Heart right ventricle (tissue), 16 donors: ENCODE measurements at regions of chr1 and their contacts with region 1.

Region 1: DNA sequence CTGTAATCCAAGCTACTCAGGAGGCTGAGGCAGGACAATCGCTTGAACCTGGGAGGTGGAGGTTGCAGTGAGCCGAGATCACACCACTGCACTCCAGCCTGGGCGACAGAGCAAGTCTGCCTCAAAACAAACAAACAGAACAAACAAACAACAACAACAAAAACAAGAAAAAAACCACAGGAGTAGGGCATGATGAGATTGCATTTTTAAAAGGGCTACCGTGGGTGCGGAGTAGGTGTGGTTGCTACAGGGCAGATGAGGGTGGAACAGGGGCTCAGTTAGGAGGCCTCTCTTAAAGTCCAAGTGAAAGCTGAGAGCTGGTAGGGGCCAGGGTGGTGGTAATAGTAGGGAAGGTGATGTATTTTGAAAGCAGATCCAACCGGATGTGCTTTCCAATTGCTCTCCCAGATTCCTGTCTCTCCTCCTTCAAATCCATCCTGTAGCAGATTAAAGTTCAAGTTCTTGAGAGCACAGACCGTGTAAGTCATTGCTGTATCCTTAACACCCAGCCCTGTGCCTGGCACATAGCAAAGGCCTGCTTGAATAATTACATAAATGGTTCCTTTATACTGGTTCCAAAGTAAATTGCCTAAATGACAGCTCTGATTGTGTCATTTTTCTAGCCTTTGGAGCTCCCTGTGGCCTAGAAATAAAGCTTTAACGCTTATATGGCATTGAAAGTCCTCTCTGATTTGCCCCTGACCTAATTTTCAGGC is 4.2 kb upstream of the LINGO4 start:
- DNase-seq: no peak
- ATAC-seq: no peak
- H3K4me3 ChIP-seq: no peak overlapping the region
- H3K27ac ChIP-seq: no peak overlapping the region
- H3K4me1 ChIP-seq: no peaks in the 10 kb centered on the region
- H3K27me3 ChIP-seq: peaks cover 0 to 7% (median 0%) of the 10 kb centered on the region in 7 donors
- CTCF ChIP-seq: no peak

Region 2: GRCh38 chr1:151756291-151756690 is 53.1 kb before region 1 on chr1:
- intact Hi-C with region 1: loop called in 1 of 10 experiments (anchors 10 kb)
- DNase-seq: no peak
- ATAC-seq: no peak
- H3K4me3 ChIP-seq: no peak overlapping the region
- H3K27ac ChIP-seq: no peak overlapping the region
- H3K4me1 ChIP-seq: no peaks in the 10 kb centered on the region
- H3K27me3 ChIP-seq: no peaks in the 10 kb centered on the region
- CTCF ChIP-seq: no peak

Region 3: GRCh38 chr1:151828965-151829698 is 19.7 kb after region 1 on chr1:
- intact Hi-C with region 1: no loop called
- DNase-seq: peak; percentile 45 to 63
- ATAC-seq: peak in 4 of 8 donors; percentile 34 to 57 (median 40)
- H3K4me3 ChIP-seq: no peak overlapping the region
- H3K27ac ChIP-seq: peak overlapping the region in 1 of 10 donors; percentile 16
- H3K4me1 ChIP-seq: peaks cover 0 to 43% (median 25%) of the 10 kb centered on the region in 9 donors
- H3K27me3 ChIP-seq: no peaks in the 10 kb centered on the region
- CTCF ChIP-seq: no peak

Region 4: GRCh38 chr1:152227310-152227928 is 418.0 kb after region 1 on chr1:
- intact Hi-C with region 1: no loop called
- DNase-seq: no peak
- ATAC-seq: no peak
- H3K4me3 ChIP-seq: no peak overlapping the region
- H3K27ac ChIP-seq: no peak overlapping the region
- H3K4me1 ChIP-seq: no peaks in the 10 kb centered on the region
- H3K27me3 ChIP-seq: no peaks in the 10 kb centered on the region
- CTCF ChIP-seq: peak in 1 of 9 donors; percentile 19

Region 5: GRCh38 chr1:152679459-152679858 is 870.0 kb after region 1 on chr1:
- intact Hi-C with region 1: no loop called
- DNase-seq: no peak
- ATAC-seq: peak in 1 of 8 donors; percentile 82
- H3K4me3 ChIP-seq: no peak overlapping the region
- H3K27ac ChIP-seq: no peak overlapping the region
- H3K4me1 ChIP-seq: no peaks in the 10 kb centered on the region
- H3K27me3 ChIP-seq: peaks cover 0 to 10% (median 4%) of the 10 kb centered on the region in 7 donors
- CTCF ChIP-seq: no peak